Spleen (tissue), 13 donors: ENCODE measurements at regions of chr6 and their contacts with region 1.

Region 1: GRCh38 chr6:4066029-4066755 is 12.7 kb downstream of the FAM217A start:
- DNase-seq: no peak
- H3K4me3 ChIP-seq: no peak overlapping the region
- H3K27ac ChIP-seq: no peak overlapping the region
- H3K4me1 ChIP-seq: no peaks in the 10 kb centered on the region
- H3K27me3 ChIP-seq: no peaks in the 10 kb centered on the region
- CTCF ChIP-seq: no peak
- POLR2A ChIP-seq: no peak

Region 2: GRCh38 chr6:3977875-3978711 is 88.1 kb before region 1 on chr6:
- intact Hi-C with region 1: no loop called
- DNase-seq: no peak
- H3K4me3 ChIP-seq: no peak overlapping the region
- H3K27ac ChIP-seq: no peak overlapping the region
- H3K4me1 ChIP-seq: peaks cover 0 to 11% (median 5%) of the 10 kb centered on the region in 6 donors
- H3K27me3 ChIP-seq: no peaks in the 10 kb centered on the region
- CTCF ChIP-seq: peak in 10 of 11 experiments; percentile 25 to 74 (median 52)
- POLR2A ChIP-seq: no peak

Region 3: DNA sequence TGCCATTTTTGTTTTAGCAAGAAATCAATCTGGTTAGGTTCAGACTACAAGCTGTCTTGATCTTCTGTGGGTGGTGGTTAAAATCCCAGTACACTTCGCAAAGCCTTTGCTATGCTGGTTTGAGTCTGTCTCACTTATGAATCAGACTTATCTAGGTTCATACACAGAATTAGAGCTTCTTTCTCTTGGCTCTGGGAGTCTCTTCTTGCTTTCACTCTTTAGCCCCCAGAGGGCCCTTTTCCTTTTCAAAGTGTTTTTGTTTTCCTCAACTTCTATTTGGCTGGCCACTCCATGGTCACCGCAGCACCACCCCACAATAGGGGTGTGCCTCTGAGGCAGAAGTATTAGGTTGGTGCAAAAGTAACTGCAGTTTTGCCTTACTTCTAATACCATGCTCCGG is 47.9 kb after region 1 on chr6:
- intact Hi-C with region 1: loop called (anchors 10 kb)
- DNase-seq: no peak
- H3K4me3 ChIP-seq: no peak overlapping the region
- H3K27ac ChIP-seq: no peak overlapping the region
- H3K4me1 ChIP-seq: no peaks in the 10 kb centered on the region
- H3K27me3 ChIP-seq: no peaks in the 10 kb centered on the region
- CTCF ChIP-seq: no peak
- POLR2A ChIP-seq: no peak